Activated T-helper 2 cell treated with anti-CD3 and anti-CD28 coated beads, Interferon-gamma antibody, Interleukin-2, Interleukin-4, amounts not matched to agents 10 μg/mL and 5 μg/mL and 100 μg/mL, durations not matched to agents 14 hours and 24 hours and 36 hours (primary cell): ENCODE measurements at regions of chr11 and their contacts with region 1.

Region 1: DNA sequence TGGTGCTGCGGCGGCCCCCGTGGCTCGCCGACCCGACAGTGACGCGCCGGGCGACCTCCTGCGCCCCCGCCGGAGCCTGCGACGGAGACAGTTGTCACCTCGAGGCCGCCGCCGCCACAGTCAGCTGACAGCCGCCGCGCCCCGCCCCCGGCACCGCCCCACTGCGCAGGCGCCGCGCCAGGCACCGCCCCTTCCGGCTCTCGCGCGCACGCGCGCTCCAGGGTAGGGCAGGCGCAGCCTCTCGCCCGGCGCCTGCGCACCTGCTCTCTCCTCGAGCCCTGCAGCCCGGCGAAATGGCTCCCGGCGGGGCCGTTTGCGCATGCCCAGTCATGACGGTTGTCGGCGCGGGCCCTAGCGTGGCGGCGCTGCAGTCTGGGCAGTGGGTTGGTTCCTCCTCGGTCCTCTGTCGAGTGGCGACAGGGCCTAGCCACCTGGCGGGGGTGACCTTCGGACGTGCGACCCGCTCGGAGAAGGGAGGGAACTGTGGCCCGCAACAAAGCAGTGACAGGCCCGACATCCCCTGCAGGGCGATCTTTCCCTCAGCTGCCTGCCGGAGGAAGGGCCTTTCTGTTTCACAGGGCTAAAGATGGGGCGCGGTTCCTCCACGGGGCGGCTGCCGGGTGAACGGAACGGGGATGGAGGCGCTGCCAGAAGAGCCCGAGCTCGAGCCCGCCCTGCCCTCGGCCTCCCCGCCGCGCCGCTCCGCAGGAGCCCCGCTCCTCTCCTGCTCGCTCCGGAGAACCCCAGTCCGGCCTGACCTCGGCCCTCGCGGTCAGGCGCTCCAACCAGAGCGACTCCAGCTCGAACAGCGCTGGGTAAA is at the start of gene TOLLIP:
- DNase-seq: peak; percentile 96
- H3K4me3 Mint-ChIP-seq: peak within 1 kb of the TSS; percentile 78
- H3K27ac Mint-ChIP-seq: peak within 1 kb of the TSS; percentile 88
- H3K4me1 Mint-ChIP-seq: peaks cover 25% of the 10 kb centered on the region
- H3K27me3 Mint-ChIP-seq: peaks cover 19% of the 10 kb centered on the region
- total RNA-seq, gene TOLLIP: 33.6 and 35.0 TPM in 2 replicates

Region 2: GRCh38 chr11:1330473-1330872 is 20.8 kb after region 1 on chr11:
- intact Hi-C with region 1: loop called (anchors 2 kb)
- DNase-seq: no peak
- H3K4me3 Mint-ChIP-seq: no peak overlapping the region
- H3K27ac Mint-ChIP-seq: no peak overlapping the region
- H3K4me1 Mint-ChIP-seq: peaks cover 4% of the 10 kb centered on the region
- H3K27me3 Mint-ChIP-seq: peaks cover 3% of the 10 kb centered on the region

Region 3: GRCh38 chr11:1351278-1351937 is 41.7 kb after region 1 on chr11:
- intact Hi-C with region 1: no loop called
- DNase-seq: no peak
- H3K4me3 Mint-ChIP-seq: no peak overlapping the region
- H3K27ac Mint-ChIP-seq: no peak overlapping the region
- H3K4me1 Mint-ChIP-seq: no peaks in the 10 kb centered on the region
- H3K27me3 Mint-ChIP-seq: no peaks in the 10 kb centered on the region